ENCODE measurements at regions of chr5 and their contacts with region 1.

Region 1: GRCh38 chr5:44774279-44774880 is 34.4 kb upstream of the MRPS30 start:
- DNase-seq: peak; percentile 67
- H3K4me3 ChIP-seq: no peak overlapping the region
- H3K27ac ChIP-seq: no peak overlapping the region
- H3K4me1 ChIP-seq: peaks cover 9% of the 10 kb centered on the region
- H3K27me3 ChIP-seq: no peaks in the 10 kb centered on the region
- CTCF ChIP-seq: peak; percentile 62

Region 2: GRCh38 chr5:44536650-44537260 is 237.6 kb before region 1 on chr5:
- CTCF ChIA-PET with region 1: interaction called, 7 read pairs
- POLR2A ChIA-PET with region 1: no interaction called
- intact Hi-C with region 1: loop called (anchors 1 kb)
- DNase-seq: peak; percentile 45
- H3K4me3 ChIP-seq: no peak overlapping the region
- H3K27ac ChIP-seq: no peak overlapping the region
- H3K4me1 ChIP-seq: no peaks in the 10 kb centered on the region
- H3K27me3 ChIP-seq: no peaks in the 10 kb centered on the region
- CTCF ChIP-seq: peak; percentile 77

Region 3: DNA sequence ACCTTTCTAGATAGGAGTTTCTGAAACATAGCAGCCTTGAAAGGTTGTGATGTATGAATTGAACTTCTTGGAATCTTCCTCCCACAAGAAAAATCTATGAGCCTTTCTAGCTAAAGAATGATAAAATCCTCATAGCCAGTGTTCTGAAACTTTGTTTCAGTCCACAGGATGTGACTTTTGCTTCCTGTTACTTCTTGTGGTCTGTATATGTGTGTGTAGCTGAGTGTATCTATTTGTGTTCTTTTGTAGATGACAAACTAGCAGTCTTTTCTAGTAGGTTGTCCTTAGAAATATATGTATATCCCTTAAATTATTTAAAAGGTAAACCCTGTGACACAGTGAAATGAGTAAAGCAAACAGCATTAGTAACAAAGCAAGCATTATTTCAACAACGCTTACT is 223.1 kb after region 1 on chr5:
- CTCF ChIA-PET with region 1: no interaction called
- POLR2A ChIA-PET with region 1: no interaction called
- intact Hi-C with region 1: no loop called
- DNase-seq: no peak
- H3K4me3 ChIP-seq: no peak overlapping the region
- H3K27ac ChIP-seq: no peak overlapping the region
- H3K4me1 ChIP-seq: no peaks in the 10 kb centered on the region
- H3K27me3 ChIP-seq: no peaks in the 10 kb centered on the region
- CTCF ChIP-seq: no peak

Region 4: DNA sequence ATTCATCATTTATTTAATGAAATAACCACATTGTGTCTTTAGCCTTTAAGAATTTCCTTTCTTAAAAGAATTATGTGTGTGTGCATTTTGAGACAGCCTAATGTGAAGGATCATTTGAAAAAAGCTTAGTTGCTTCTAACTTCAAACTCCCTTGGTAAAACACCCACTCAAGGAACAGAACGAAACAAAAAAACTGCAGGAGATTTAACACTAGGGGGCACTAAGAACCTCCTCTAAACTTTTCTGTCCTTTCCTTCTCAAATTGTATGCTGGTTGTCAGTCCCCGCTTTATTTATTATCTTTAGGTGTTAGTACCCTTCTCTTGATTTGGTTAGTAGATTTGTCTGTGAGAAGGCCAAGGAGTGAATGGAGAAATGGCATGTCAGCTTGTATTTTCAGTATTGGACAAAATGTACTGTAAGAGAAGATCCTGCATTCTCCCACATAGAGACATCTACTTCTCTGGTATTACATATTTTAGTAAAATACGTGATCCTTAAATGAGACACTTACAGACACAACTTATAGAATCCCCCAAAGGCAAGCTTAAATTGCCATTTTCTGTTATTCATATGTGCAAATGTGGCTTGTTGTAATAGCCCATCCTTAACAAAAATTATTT is 264.1 kb after region 1 on chr5:
- CTCF ChIA-PET with region 1: no interaction called
- POLR2A ChIA-PET with region 1: no interaction called
- intact Hi-C with region 1: no loop called
- DNase-seq: peak; percentile 75
- H3K4me3 ChIP-seq: no peak overlapping the region
- H3K27ac ChIP-seq: no peak overlapping the region
- H3K4me1 ChIP-seq: no peaks in the 10 kb centered on the region
- H3K27me3 ChIP-seq: no peaks in the 10 kb centered on the region
- CTCF ChIP-seq: peak; percentile 73

Measured in A673 (cell line).